H1 (cell line): ENCODE measurements at regions of chr14 and their contacts with region 1.

Region 1: GRCh38 chr14:24279301-24280186 is 8.1 kb upstream of the RABGGTA start:
- DNase-seq: no peak
- H3K4me3 ChIP-seq: no peak overlapping the region
- H3K27ac ChIP-seq: no peak overlapping the region
- H3K4me1 ChIP-seq: no peaks in the 10 kb centered on the region
- H3K27me3 ChIP-seq: no peaks in the 10 kb centered on the region
- CTCF ChIP-seq: peak; percentile 27 to 52 (median 51); a peak in 2 of 4 replicates
- EP300 ChIP-seq: no peak
- POLR2A ChIP-seq: no peak
- RAD21 ChIP-seq: peak; percentile 10 to 28; a peak in 2 of 4 replicates

Region 2: GRCh38 chr14:24108336-24108874 is 171.1 kb before region 1 on chr14:
- CTCF ChIA-PET with region 1: no interaction called
- POLR2A ChIA-PET with region 1: no interaction called
- DNase-seq: no peak
- H3K4me3 ChIP-seq: no peak overlapping the region
- H3K27ac ChIP-seq: no peak overlapping the region
- H3K4me1 ChIP-seq: no peaks in the 10 kb centered on the region
- H3K27me3 ChIP-seq: no peaks in the 10 kb centered on the region
- CTCF ChIP-seq: no peak
- EP300 ChIP-seq: no peak
- POLR2A ChIP-seq: no peak
- RAD21 ChIP-seq: no peak

Region 3: DNA sequence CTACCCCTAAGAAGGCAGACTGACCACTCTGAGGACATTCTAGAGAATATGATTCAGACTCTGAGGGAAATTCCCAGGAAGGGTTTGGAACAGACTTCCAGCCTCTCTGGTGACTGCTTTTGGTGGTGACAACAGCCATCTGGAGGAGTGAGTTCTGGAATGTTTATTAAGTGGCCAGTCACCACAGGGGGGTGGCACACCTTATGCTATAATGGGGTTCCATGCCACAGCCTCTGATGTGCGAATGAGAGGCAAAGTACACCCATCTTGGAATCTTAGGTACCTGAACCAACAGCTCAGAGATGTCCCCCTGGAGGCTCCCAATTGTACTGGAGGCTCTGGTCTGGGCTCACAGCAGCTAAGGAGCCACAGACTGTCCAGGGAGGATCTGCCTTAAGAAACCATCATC is 27.7 kb before region 1 on chr14:
- CTCF ChIA-PET with region 1: interaction called, 21 read pairs
- POLR2A ChIA-PET with region 1: interaction called, 4 read pairs
- DNase-seq: no peak
- H3K4me3 ChIP-seq: no peak overlapping the region
- H3K27ac ChIP-seq: no peak overlapping the region
- H3K4me1 ChIP-seq: no peaks in the 10 kb centered on the region
- H3K27me3 ChIP-seq: no peaks in the 10 kb centered on the region
- CTCF ChIP-seq: peak in 1 of 3 experiments; percentile 13; a peak in 1 of 4 replicates
- EP300 ChIP-seq: no peak
- POLR2A ChIP-seq: no peak
- RAD21 ChIP-seq: no peak

Region 4: DNA sequence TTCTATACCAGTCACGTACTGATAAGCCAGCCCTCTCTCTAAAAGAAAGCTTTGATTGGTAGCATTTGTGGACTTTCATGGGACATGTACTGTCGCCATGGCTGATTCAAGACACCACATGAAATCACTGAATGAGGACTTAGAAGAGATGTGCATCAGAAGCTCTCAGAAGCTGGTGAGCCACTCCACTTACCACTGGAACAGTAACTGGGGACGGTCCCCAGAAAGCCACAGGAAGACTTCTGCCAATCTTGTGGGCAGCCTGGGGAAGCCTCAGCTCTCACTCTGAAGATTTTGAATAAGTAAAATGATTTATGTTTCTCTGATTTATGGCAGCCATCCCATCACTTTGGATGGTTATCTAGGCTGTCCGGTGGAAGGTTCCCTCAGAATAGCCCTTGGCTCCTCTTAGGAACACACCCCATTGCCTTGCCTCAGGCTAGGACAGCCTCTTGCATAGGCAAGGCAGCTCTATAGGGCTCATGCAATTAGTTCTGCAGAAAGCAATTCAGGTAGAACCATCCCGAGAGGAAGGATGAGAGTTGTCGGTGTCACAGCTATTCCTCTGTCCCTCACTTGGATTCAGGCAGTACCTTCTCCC is 10.2 kb after region 1 on chr14:
- CTCF ChIA-PET with region 1: interaction called, 137 read pairs
- POLR2A ChIA-PET with region 1: interaction called, 13 read pairs
- DNase-seq: no peak
- H3K4me3 ChIP-seq: no peak overlapping the region
- H3K27ac ChIP-seq: no peak overlapping the region
- H3K4me1 ChIP-seq: no peaks in the 10 kb centered on the region
- H3K27me3 ChIP-seq: no peaks in the 10 kb centered on the region
- CTCF ChIP-seq: no peak
- EP300 ChIP-seq: no peak
- POLR2A ChIP-seq: no peak
- RAD21 ChIP-seq: no peak

Region 5: DNA sequence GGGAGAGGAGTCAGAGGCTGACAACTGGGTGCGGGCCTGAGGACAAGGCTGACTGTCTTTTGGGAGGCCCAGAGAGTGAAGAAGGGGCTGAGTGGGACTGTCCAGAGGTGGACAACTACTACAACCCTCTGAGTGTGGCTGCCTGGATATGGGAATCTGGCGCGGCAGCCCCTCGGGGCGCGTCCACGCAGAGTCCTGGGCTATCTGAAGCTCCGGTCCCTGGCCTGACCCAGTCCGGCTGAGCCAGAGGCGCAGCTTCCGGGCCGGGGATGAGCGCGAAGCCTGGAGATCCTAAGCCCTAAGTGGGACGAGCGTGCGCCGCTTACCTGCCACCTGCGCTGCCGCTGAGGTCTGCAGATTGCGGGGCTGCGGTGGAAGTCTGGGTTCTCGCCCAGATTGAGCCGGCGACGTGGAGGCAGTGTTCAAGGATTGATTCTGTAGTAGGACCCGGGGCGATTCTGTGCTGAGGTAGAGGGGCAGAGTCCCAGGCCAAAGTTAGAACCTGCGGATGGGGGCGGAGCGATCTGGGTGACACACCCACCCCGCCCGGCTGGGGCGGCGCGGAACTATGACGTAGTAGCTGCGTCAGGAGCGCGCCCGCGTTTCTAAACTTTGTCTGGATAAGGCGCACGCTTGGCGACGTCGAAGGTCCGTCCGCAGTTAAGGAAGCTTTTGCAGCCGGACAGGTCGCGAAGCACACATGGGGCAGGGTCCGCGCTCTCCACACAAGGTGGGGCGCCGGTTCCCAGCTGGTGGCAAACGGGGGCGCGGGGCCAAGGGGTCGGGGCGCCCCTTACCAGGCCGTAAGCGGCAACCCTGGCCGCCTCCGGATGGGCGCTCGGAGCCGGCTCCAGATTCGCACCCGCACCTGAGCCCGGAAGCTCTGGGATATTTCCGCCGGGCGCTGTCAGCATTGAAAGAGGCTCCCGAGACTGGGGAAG is 20.0 kb after region 1 on chr14 and contains the starts of genes DHRS1 and NOP9:
- CTCF ChIA-PET with region 1: interaction called, 137 read pairs
- POLR2A ChIA-PET with region 1: interaction called, 8 read pairs
- DNase-seq: peak; percentile 61 to 99
- H3K4me3 ChIP-seq: peak within 1 kb of the TSS; percentile 76 to 91 (median 88)
- H3K27ac ChIP-seq: no peak within 1 kb of the TSS
- H3K4me1 ChIP-seq: peaks cover 0 to 7% (median 4%) of the 10 kb centered on the region in 4 experiments; a peak in 5 of 7 replicates
- H3K27me3 ChIP-seq: no peaks in the 10 kb centered on the region
- CTCF ChIP-seq: no peak
- EP300 ChIP-seq: peak in 1 of 2 experiments; percentile 10; a peak in 1 of 3 replicates
- POLR2A ChIP-seq: peak; percentile 81 to 88
- RAD21 ChIP-seq: no peak
- total RNA-seq, gene DHRS1: 8.8 and 13.4 TPM in 2 replicates
- total RNA-seq, gene NOP9: 34.8 and 39.3 TPM in 2 replicates

Region 6: DNA sequence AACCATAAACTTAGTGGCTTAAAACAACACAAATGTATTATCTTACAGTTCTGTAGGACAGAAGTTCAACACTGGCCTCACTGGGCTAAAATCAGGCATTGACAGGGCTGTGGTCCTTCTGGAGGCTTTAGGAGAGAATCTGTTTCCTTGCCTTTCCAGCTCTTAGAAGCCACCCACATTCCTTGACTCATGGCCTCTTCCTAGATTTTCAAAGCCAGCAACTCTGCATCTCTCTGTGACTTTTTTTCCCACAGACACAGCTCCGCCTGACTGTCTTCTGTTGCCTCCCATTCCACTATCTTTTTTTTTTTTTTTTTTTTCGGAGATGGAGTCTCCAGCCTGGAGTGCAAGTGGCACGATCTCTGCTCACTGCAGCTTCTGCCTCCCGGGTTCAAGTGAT is 76.7 kb after region 1 on chr14:
- CTCF ChIA-PET with region 1: no interaction called
- POLR2A ChIA-PET with region 1: no interaction called
- DNase-seq: no peak
- H3K4me3 ChIP-seq: no peak overlapping the region
- H3K27ac ChIP-seq: no peak overlapping the region
- H3K4me1 ChIP-seq: no peaks in the 10 kb centered on the region
- H3K27me3 ChIP-seq: peaks cover 0 to 5% (median 2%) of the 10 kb centered on the region in 4 experiments; a peak in 4 of 7 replicates
- CTCF ChIP-seq: no peak
- EP300 ChIP-seq: no peak
- POLR2A ChIP-seq: no peak
- RAD21 ChIP-seq: no peak